Calu3 (cell line): ENCODE measurements at regions of chr13 and their contacts with region 1.

Region 1: DNA sequence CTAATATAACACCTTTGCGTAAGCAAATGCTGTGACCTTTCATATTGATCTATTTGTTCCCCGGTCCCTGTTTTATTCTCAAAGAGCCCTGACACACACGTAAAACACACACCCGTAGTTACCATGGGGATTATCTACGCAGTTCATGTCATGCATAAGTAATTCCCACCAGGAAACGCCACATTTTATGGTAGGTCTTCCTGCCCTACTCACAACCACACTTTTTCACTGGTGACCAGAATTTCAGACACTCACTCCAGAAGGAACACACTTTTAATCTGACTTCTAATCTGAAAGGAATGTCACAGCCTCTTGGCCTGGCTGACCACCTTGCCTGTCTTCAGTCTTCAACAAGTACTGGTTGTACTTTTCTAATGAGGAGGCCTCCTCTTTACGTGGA is 46.8 kb downstream of the SLC7A1 start:
- DNase-seq: peak; percentile 57
- H3K4me3 Mint-ChIP-seq: peak overlapping the region; percentile 51
- H3K27ac Mint-ChIP-seq: peak overlapping the region; percentile 93
- H3K4me1 Mint-ChIP-seq: peaks cover 34% of the 10 kb centered on the region
- H3K27me3 Mint-ChIP-seq: no peaks in the 10 kb centered on the region
- CTCF ChIP-seq: no peak

Region 2: DNA sequence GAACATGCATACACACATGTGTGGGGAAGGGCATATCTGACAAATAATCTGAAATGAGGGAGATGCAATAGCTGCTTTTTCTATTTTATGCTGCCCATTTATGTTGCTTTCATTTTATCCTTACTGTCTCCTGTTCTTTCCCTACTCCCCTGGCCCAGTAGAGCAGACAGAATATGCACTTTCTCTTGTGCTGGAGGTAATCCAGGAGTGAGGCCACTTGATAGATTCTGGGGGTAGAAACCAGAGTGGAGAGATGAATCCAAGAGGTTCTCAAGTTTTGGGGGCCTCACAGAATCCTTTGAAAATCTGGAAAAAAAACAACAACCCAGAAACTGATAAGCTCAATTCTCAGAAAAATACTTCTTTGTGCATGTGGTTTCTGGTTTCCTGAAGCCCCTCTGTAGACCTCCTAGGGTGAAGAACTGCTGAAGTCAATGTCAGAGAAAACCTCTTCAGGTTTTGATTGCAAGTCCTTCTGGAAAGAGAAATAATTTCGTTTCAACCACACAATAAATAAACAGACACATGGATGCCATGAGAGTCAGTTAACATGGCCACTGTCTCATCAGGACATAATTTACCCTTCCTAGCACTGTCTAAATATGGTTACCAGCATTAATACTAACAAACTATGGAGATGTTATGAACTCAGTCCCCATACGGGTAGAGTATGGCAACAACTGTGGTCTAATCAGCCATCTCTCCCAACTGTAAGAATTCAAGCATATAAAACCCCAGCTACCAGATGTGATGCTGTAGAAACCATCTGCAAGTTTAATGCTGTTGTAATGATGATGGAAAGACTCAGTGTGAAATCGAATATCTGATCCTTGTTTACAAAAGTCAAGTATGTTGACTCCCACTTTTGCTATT is 308.8 kb before region 1 on chr13:
- CTCF ChIA-PET with region 1: no interaction called
- intact Hi-C with region 1: no loop called
- DNase-seq: no peak
- H3K4me3 Mint-ChIP-seq: no peak overlapping the region
- H3K27ac Mint-ChIP-seq: no peak overlapping the region
- H3K4me1 Mint-ChIP-seq: no peaks in the 10 kb centered on the region
- H3K27me3 Mint-ChIP-seq: no peaks in the 10 kb centered on the region
- CTCF ChIP-seq: no peak

Region 3: GRCh38 chr13:29594301-29594709 is 45.6 kb after region 1 on chr13:
- CTCF ChIA-PET with region 1: no interaction called
- intact Hi-C with region 1: loop called (anchors 5 kb)
- DNase-seq: peak; percentile 50
- H3K4me3 Mint-ChIP-seq: peak overlapping the region; percentile 70
- H3K27ac Mint-ChIP-seq: peak overlapping the region; percentile 46
- H3K4me1 Mint-ChIP-seq: peaks cover 48% of the 10 kb centered on the region
- H3K27me3 Mint-ChIP-seq: no peaks in the 10 kb centered on the region
- CTCF ChIP-seq: no peak

Region 4: GRCh38 chr13:29664591-29664990 is 115.9 kb after region 1 on chr13:
- CTCF ChIA-PET with region 1: no interaction called
- intact Hi-C with region 1: no loop called
- DNase-seq: no peak
- H3K4me3 Mint-ChIP-seq: no peak overlapping the region
- H3K27ac Mint-ChIP-seq: no peak overlapping the region
- H3K4me1 Mint-ChIP-seq: no peaks in the 10 kb centered on the region
- H3K27me3 Mint-ChIP-seq: peaks cover 45% of the 10 kb centered on the region
- CTCF ChIP-seq: no peak